ENCODE measurements at regions of chr7 and their contacts with region 1.

Region 1: GRCh38 chr7:35975851-35976454 is 175.1 kb downstream of the SEPTIN7 start:
- DNase-seq: peak in 9 of 14 experiments; percentile 17 to 84 (median 40)
- ATAC-seq: peak; percentile 76
- H3K4me3 ChIP-seq: no peak overlapping the region
- H3K4me3 Mint-ChIP-seq: no peak overlapping the region
- H3K27ac ChIP-seq: no peak overlapping the region
- H3K27ac Mint-ChIP-seq: no peak overlapping the region
- H3K4me1 ChIP-seq: no peaks in the 10 kb centered on the region
- H3K4me1 Mint-ChIP-seq: no peaks in the 10 kb centered on the region
- H3K27me3 ChIP-seq: peaks cover 5 to 11% of the 10 kb centered on the region in 2 experiments
- H3K27me3 Mint-ChIP-seq: peaks cover 37% of the 10 kb centered on the region
- CTCF ChIP-seq: peak; percentile 85

Region 2: GRCh38 chr7:35424869-35425495 is 551.0 kb before region 1 on chr7:
- CTCF ChIA-PET with region 1: interaction called, 3 read pairs
- POLR2A ChIA-PET with region 1: no interaction called
- intact Hi-C with region 1: loop called in 1 of 2 experiments (anchors 10 kb)
- DNase-seq: peak; percentile 17 to 78 (median 36)
- ATAC-seq: peak; percentile 76
- H3K4me3 ChIP-seq: no peak overlapping the region
- H3K4me3 Mint-ChIP-seq: no peak overlapping the region
- H3K27ac ChIP-seq: no peak overlapping the region
- H3K27ac Mint-ChIP-seq: no peak overlapping the region
- H3K4me1 ChIP-seq: no peaks in the 10 kb centered on the region
- H3K4me1 Mint-ChIP-seq: peaks cover 9% of the 10 kb centered on the region
- H3K27me3 ChIP-seq: peaks cover 0 to 5% of the 10 kb centered on the region in 2 experiments
- H3K27me3 Mint-ChIP-seq: peaks cover 37% of the 10 kb centered on the region
- CTCF ChIP-seq: peak; percentile 70

Region 3: GRCh38 chr7:35714862-35715261 is 261.1 kb before region 1 on chr7:
- CTCF ChIA-PET with region 1: no interaction called
- POLR2A ChIA-PET with region 1: no interaction called
- intact Hi-C with region 1: loop called in 1 of 2 experiments (anchors 5 kb)
- DNase-seq: no peak
- ATAC-seq: no peak
- H3K4me3 ChIP-seq: no peak overlapping the region
- H3K4me3 Mint-ChIP-seq: no peak overlapping the region
- H3K27ac ChIP-seq: no peak overlapping the region
- H3K27ac Mint-ChIP-seq: no peak overlapping the region
- H3K4me1 ChIP-seq: peaks cover 4% of the 10 kb centered on the region
- H3K4me1 Mint-ChIP-seq: peaks cover 5% of the 10 kb centered on the region
- H3K27me3 ChIP-seq: no peaks in the 10 kb centered on the region
- H3K27me3 Mint-ChIP-seq: no peaks in the 10 kb centered on the region
- CTCF ChIP-seq: no peak

Region 4: DNA sequence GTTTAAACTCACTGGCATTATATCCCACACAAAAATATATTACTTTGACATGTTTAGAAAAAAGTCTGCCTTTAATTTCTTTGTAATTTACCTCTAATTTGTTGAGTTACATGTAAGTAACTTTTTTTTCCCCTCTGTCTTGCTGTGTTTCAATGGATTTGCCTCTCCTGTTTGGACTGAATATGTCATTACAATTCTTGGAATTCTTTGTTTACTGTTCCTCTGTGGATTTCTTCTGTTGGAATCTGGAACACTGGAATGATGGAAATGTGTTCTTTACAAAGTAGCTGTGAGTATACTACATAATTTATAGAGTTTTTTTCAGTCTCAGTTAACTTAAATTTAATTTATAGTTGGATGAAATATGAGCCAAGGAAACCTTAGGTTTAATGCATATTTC is 144.7 kb before region 1 on chr7:
- CTCF ChIA-PET with region 1: no interaction called
- POLR2A ChIA-PET with region 1: no interaction called
- intact Hi-C with region 1: no loop called
- DNase-seq: no peak
- ATAC-seq: no peak
- H3K4me3 ChIP-seq: no peak overlapping the region
- H3K4me3 Mint-ChIP-seq: no peak overlapping the region
- H3K27ac ChIP-seq: no peak overlapping the region
- H3K27ac Mint-ChIP-seq: no peak overlapping the region
- H3K4me1 ChIP-seq: peaks cover 18% of the 10 kb centered on the region
- H3K4me1 Mint-ChIP-seq: peaks cover 87% of the 10 kb centered on the region
- H3K27me3 ChIP-seq: no peaks in the 10 kb centered on the region
- H3K27me3 Mint-ChIP-seq: no peaks in the 10 kb centered on the region
- CTCF ChIP-seq: no peak

Region 5: DNA sequence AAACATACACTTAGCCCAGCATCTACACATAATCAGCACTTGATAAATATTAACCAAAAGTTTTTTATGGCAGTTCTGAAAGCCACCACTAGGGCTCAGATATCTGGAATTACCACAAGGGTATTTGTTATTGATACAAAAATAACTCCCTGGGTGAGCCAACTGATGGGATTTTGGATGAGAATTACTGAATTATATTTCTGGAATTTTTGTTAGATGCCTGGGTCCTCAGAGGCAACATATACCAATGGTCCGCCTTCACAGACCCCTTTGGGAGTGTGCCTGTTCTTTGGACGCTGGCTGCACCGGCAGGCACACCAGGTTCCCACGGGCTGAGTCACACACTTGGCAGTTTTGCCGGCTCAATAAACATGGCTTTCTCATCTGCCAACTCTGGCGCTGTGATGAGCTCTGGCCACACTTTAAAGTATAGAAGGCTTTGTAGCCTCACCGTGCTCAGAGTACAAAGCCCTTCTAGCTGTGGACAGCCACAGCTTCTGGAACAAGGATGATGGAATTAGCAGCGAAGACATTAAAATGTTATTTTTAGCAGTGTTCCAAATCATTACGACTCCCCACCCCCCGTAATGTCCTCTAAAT is 152.6 kb after region 1 on chr7:
- CTCF ChIA-PET with region 1: no interaction called
- POLR2A ChIA-PET with region 1: no interaction called
- intact Hi-C with region 1: no loop called
- DNase-seq: peak in 2 of 14 experiments; percentile 24 to 27
- ATAC-seq: no peak
- H3K4me3 ChIP-seq: no peak overlapping the region
- H3K4me3 Mint-ChIP-seq: no peak overlapping the region
- H3K27ac ChIP-seq: no peak overlapping the region
- H3K27ac Mint-ChIP-seq: no peak overlapping the region
- H3K4me1 ChIP-seq: peaks cover 17% of the 10 kb centered on the region
- H3K4me1 Mint-ChIP-seq: peaks cover 6% of the 10 kb centered on the region
- H3K27me3 ChIP-seq: no peaks in the 10 kb centered on the region
- H3K27me3 Mint-ChIP-seq: no peaks in the 10 kb centered on the region
- CTCF ChIP-seq: peak; percentile 65